Caco-2 (cell line): ENCODE measurements at regions of chr6 and their contacts with region 1.

Region 1: DNA sequence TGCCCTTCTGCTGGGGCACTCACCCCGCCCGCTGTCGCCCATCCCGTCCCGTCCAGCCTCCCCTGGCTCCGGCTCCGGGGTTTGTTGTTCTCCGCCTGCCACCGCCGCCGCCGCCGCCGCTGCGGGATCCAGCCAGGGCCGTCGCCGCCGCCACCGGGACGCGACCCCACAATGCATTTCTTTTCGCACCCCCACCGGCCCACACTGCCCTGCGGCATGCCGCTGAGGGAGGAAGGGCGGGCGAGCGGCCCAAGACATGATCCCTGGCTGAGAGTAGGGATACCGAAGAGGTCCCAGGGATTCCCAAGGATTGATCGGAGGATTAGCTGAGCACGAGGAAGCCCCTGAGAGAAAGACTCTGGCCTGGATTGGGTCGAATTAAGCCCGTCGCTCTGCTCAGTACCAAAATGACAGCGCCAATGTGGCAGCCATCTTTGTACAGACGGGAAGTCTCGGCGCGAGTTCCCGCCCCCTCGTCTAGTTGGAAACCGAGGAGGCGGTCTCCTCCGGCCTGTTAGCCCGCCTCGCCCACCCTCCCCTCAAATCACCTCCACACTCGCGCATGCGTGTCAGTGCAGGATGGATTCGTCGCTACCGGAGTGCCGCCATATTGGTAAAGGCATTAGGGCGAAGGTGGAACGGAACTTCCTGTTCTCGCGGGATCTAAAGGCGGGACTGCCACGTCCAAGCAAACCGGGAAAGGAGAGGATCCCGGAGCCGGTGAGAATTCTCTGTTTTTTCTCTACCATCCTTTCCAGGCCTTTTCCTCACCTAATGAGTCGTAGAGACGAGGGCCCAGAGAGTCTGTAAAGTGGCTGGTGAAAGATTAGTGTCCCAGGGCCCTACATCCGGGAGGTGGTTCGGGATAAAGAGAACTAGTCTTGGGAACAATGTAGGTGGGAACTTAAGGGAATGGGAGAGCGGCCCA is at the starts of genes RXRB and SLC39A7:
- DNase-seq: peak; percentile 97 to 99
- H3K4me3 ChIP-seq: peak within 1 kb of the TSS; percentile 67
- H3K4me3 Mint-ChIP-seq: peak within 1 kb of the TSS; percentile 100
- H3K27ac Mint-ChIP-seq: peak within 1 kb of the TSS; percentile 99
- H3K4me1 ChIP-seq: peaks cover 29% of the 10 kb centered on the region
- H3K4me1 Mint-ChIP-seq: peaks cover 43% of the 10 kb centered on the region
- H3K27me3 ChIP-seq: no peaks in the 10 kb centered on the region
- H3K27me3 Mint-ChIP-seq: no peaks in the 10 kb centered on the region
- CTCF ChIP-seq: no peak
- total RNA-seq, gene RXRB: 29.5 and 30.4 TPM in 2 replicates
- total RNA-seq, gene SLC39A7: 140 and 141 TPM in 2 replicates

Region 2: DNA sequence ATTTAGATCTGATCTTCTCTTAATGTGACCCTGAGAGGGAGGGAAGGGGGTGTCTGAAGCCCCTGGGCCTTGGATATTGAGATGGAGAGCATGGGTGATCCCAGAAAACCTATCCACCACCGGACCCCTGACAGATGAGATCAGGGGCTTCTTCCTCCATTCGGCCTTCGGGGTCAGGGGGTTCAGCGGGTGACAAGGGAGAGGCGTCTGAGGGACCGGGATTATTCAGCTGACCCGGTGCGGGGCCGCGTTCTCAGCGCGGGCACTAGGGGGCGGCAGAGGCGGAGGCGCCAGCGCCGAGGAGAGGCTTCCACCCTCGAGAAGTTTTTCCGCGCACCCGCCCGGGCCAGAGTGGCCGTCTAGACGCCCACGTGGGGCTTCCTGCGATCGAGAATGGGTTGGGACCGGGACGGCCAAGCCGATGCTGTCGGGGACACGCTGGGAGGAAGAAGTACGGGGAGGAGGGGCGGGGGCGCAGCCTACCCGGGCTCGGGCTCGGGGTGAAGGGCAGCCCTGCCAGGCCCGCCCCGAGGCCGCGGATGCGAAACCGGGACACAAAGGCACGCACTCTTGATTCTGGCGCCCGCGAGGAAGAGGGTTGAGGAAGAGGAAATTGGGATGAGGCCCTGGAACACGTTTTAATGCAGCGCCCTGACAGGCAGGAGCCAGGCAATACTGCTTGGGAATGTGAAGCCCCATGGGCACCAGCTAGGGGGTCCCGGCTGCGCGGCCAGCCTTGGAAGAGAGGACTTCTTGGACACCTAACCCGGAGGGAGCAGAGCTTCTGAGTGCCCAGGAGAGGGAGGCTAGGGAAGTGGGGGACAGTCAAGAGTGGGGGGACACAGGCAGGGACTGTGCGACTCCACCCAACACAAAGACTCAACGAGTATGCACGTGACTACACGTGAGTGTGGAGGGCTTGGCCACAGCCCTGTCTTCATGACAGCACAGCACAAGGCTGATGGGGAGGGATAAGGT is 38.8 kb before region 1 on chr6:
- CTCF ChIA-PET with region 1: interaction called, 6 read pairs
- POLR2A ChIA-PET with region 1: no interaction called
- intact Hi-C with region 1: loop called (anchors 1 kb)
- DNase-seq: peak; percentile 65 to 86
- H3K4me3 ChIP-seq: peak overlapping the region; percentile 50
- H3K4me3 Mint-ChIP-seq: peak overlapping the region; percentile 80
- H3K27ac Mint-ChIP-seq: peak overlapping the region; percentile 65
- H3K4me1 ChIP-seq: no peaks in the 10 kb centered on the region
- H3K4me1 Mint-ChIP-seq: peaks cover 12% of the 10 kb centered on the region
- H3K27me3 ChIP-seq: no peaks in the 10 kb centered on the region; the same call in 1 of the 2 replicates
- H3K27me3 Mint-ChIP-seq: peaks cover 8% of the 10 kb centered on the region
- CTCF ChIP-seq: peak; percentile 85 to 92

Region 3: GRCh38 chr6:33276864-33277662 is 76.6 kb after region 1 on chr6 and contains the start of gene B3GALT4:
- CTCF ChIA-PET with region 1: no interaction called
- POLR2A ChIA-PET with region 1: no interaction called
- intact Hi-C with region 1: no loop called
- DNase-seq: peak in 1 of 2 experiments; percentile 55
- H3K4me3 ChIP-seq: no peak within 1 kb of the TSS
- H3K4me3 Mint-ChIP-seq: peak within 1 kb of the TSS; percentile 56
- H3K27ac Mint-ChIP-seq: peak within 1 kb of the TSS; percentile 18
- H3K4me1 ChIP-seq: peaks cover 18% of the 10 kb centered on the region
- H3K4me1 Mint-ChIP-seq: peaks cover 18% of the 10 kb centered on the region
- H3K27me3 ChIP-seq: no peaks in the 10 kb centered on the region
- H3K27me3 Mint-ChIP-seq: no peaks in the 10 kb centered on the region
- CTCF ChIP-seq: peak; percentile 10 to 44
- total RNA-seq, gene B3GALT4: 0.34 and 0.67 TPM in 2 replicates